Colonic mucosa (tissue), 4 donors: ENCODE measurements at regions of chr2 and their contacts with region 1.

Region 1: GRCh38 chr2:152925547-152926327 is 207.3 kb downstream of the ARL6IP6 start:
- DNase-seq: peak; percentile 81
- H3K4me3 ChIP-seq: no peak overlapping the region
- H3K27ac ChIP-seq: no peak overlapping the region
- H3K4me1 ChIP-seq: no peaks in the 10 kb centered on the region
- H3K27me3 ChIP-seq: no peaks in the 10 kb centered on the region
- CTCF ChIP-seq: peak; percentile 71

Region 2: GRCh38 chr2:152762202-152762601 is 163.5 kb before region 1 on chr2:
- intact Hi-C with region 1: no loop called
- DNase-seq: no peak
- H3K4me3 ChIP-seq: no peak overlapping the region
- H3K27ac ChIP-seq: no peak overlapping the region
- H3K4me1 ChIP-seq: no peaks in the 10 kb centered on the region
- H3K27me3 ChIP-seq: no peaks in the 10 kb centered on the region
- CTCF ChIP-seq: no peak

Region 3: DNA sequence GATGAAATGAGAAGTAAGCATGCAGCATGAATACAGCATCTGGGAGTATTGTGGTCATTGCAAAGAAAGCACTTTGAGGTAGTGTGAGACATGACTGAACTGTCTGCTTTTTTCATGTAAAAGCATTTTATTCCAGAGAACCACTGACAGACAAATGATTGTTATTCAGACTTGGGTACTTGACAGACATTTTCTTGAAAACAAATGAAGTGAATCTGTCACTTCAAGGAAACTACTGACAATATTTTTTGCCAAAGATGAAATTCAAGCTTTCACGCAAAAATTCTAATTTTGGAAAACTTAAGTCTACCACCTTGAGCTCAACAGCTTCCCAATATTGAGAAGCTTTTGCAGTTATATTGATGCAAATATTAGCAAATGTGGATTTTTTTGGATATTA is 48.4 kb after region 1 on chr2:
- intact Hi-C with region 1: no loop called
- DNase-seq: no peak
- H3K4me3 ChIP-seq: no peak overlapping the region
- H3K27ac ChIP-seq: no peak overlapping the region
- H3K4me1 ChIP-seq: no peaks in the 10 kb centered on the region
- H3K27me3 ChIP-seq: no peaks in the 10 kb centered on the region
- CTCF ChIP-seq: no peak

Region 4: GRCh38 chr2:153291718-153292435 is 366.1 kb after region 1 on chr2:
- intact Hi-C with region 1: loop called (anchors 5 kb)
- DNase-seq: no peak
- H3K4me3 ChIP-seq: no peak overlapping the region
- H3K27ac ChIP-seq: no peak overlapping the region
- H3K4me1 ChIP-seq: no peaks in the 10 kb centered on the region
- H3K27me3 ChIP-seq: no peaks in the 10 kb centered on the region
- CTCF ChIP-seq: no peak

Region 5: DNA sequence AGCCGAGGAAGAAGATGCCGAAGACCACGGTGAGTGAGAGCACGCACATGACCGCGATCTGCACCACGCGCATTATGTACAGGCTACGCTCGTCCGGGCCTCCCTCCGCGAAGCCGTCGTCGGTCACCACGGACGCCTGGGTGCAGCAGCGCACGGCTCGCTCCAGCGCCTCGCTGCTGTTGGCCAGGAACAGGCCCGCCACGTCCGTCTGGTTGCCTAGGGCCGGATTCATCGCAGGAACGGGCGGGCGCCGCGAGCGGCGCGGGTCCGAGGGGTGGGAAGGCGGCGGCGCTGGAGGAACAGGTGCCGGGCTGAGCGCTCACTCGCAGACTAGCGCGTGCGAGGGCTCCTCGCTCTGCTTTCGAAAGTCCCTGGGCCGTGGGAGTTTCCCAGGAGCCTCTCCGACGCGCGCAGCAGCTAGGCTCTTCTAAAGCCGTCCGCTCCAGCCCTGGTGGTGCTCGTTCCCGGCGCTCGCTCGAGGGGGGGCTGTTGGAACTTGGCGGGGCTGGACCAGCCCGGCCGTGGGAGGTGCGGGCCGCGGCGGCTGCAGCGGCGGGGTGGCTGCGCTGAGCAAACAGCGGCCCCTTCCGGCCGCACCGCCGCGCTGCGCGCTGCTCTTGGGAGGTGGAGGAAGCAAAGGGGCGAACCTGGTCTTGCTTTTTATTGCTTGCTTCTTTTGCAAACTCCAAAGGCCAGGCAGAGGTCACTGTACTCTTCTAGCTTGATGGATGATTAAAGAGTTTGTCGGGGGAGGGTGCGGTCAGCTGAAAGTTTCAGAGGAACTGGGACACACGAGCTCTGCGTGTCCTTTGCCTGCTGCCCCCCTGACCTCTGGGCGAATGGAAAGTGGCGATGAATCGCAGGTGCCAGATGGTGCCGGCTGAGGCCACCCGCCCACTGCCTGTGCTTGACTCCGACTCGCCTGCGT is 552.9 kb after region 1 on chr2 and contains the start of gene RPRM:
- intact Hi-C with region 1: loop called (anchors 5 kb)
- DNase-seq: peak; percentile 65
- H3K4me3 ChIP-seq: peak within 1 kb of the TSS; percentile 43
- H3K27ac ChIP-seq: no peak within 1 kb of the TSS
- H3K4me1 ChIP-seq: peaks cover 10% of the 10 kb centered on the region
- H3K27me3 ChIP-seq: peaks cover 29% of the 10 kb centered on the region
- CTCF ChIP-seq: peak; percentile 77
- total RNA-seq, gene RPRM: 0.88 TPM in 1 of 2 donors, not detected in the other